H1 (cell line): ENCODE measurements at regions of chr1 and their contacts with region 1.

Region 1: GRCh38 chr1:206912445-206913095 is 9.2 kb downstream of the FCMR start:
- DNase-seq: peak in 1 of 2 experiments; percentile 67
- H3K4me3 ChIP-seq: no peak overlapping the region
- H3K27ac ChIP-seq: no peak overlapping the region
- H3K4me1 ChIP-seq: peaks cover 0 to 7% (median under 1%) of the 10 kb centered on the region in 4 experiments; a peak in 2 of 7 replicates
- H3K27me3 ChIP-seq: peaks cover 8 to 30% (median 27%) of the 10 kb centered on the region in 4 experiments
- CTCF ChIP-seq: peak; percentile 69 to 90 (median 87)
- EP300 ChIP-seq: no peak
- POLR2A ChIP-seq: no peak
- RAD21 ChIP-seq: peak; percentile 80 to 87

Region 2: GRCh38 chr1:206635080-206635977 is 277.2 kb before region 1 on chr1 and contains the start of gene DYRK3:
- CTCF ChIA-PET with region 1: interaction called, 14 read pairs
- POLR2A ChIA-PET with region 1: interaction called, 3 read pairs
- DNase-seq: peak; percentile 63 to 97
- H3K4me3 ChIP-seq: peak within 1 kb of the TSS; percentile 66 to 88 (median 79)
- H3K27ac ChIP-seq: no peak within 1 kb of the TSS
- H3K4me1 ChIP-seq: peaks cover 0 to 10% (median 4%) of the 10 kb centered on the region in 4 experiments; a peak in 4 of 7 replicates
- H3K27me3 ChIP-seq: peaks cover 0 to 4% (median 0%) of the 10 kb centered on the region in 4 experiments; a peak in 2 of 7 replicates
- CTCF ChIP-seq: no peak
- EP300 ChIP-seq: no peak
- POLR2A ChIP-seq: peak in 1 of 2 experiments; percentile 68; a peak in 1 of 3 replicates
- RAD21 ChIP-seq: no peak
- total RNA-seq, gene DYRK3: 7.7 and 8.5 TPM in 2 replicates

Region 3: GRCh38 chr1:206744683-206745082 is 167.9 kb before region 1 on chr1:
- CTCF ChIA-PET with region 1: interaction called, 11 read pairs
- POLR2A ChIA-PET with region 1: no interaction called
- DNase-seq: no peak
- H3K4me3 ChIP-seq: no peak overlapping the region
- H3K27ac ChIP-seq: no peak overlapping the region
- H3K4me1 ChIP-seq: no peaks in the 10 kb centered on the region
- H3K27me3 ChIP-seq: no peaks in the 10 kb centered on the region; a peak in 1 of 7 replicates
- CTCF ChIP-seq: no peak
- EP300 ChIP-seq: no peak
- POLR2A ChIP-seq: no peak
- RAD21 ChIP-seq: no peak

Region 4: GRCh38 chr1:206803221-206803730 is 109.3 kb before region 1 on chr1:
- CTCF ChIA-PET with region 1: interaction called, 57 read pairs
- POLR2A ChIA-PET with region 1: no interaction called
- DNase-seq: no peak
- H3K4me3 ChIP-seq: no peak overlapping the region
- H3K27ac ChIP-seq: no peak overlapping the region
- H3K4me1 ChIP-seq: no peaks in the 10 kb centered on the region
- H3K27me3 ChIP-seq: no peaks in the 10 kb centered on the region
- CTCF ChIP-seq: no peak
- EP300 ChIP-seq: no peak
- POLR2A ChIP-seq: no peak
- RAD21 ChIP-seq: no peak

Region 5: DNA sequence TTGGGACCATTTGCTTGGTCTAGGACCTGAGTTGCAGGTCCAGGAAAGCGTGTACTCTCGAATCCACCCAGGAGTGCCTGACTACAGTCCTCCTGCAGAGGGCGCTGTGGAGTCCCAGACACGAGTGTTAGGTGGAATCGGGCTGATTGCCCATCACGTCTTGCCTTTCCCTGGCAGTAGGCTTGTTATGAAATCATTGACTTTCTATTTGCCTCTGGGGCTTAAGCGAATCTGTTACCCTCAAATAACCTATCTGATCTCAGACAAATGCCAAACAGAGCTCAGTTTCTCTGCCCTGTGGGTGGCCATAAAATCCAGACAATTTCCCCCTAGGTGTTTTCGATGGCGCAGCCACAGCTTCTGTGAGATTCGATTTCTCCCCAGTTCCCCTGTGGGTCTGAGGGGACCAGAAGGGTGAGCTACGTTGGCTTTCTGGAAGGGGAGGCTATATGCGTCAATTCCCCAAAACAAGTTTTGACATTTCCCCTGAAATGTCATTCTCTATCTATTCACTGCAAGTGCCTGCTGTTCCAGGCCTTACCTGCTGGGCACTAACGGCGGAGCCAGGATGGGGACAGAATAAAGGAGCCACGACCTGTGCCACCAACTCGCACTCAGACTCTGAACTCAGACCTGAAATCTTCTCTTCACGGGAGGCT is 47.4 kb before region 1 on chr1 and contains the start of gene IL20:
- CTCF ChIA-PET with region 1: interaction called, 60 read pairs
- POLR2A ChIA-PET with region 1: no interaction called
- DNase-seq: peak; percentile 43 to 96
- H3K4me3 ChIP-seq: no peak within 1 kb of the TSS
- H3K27ac ChIP-seq: no peak within 1 kb of the TSS
- H3K4me1 ChIP-seq: no peaks in the 10 kb centered on the region
- H3K27me3 ChIP-seq: peaks cover 0 to 2% (median 0%) of the 10 kb centered on the region in 4 experiments; a peak in 1 of 7 replicates
- CTCF ChIP-seq: peak; percentile 93 to 99 (median 97)
- EP300 ChIP-seq: no peak
- POLR2A ChIP-seq: no peak
- RAD21 ChIP-seq: peak; percentile 61 to 74
- total RNA-seq, gene IL20: not detected in 2 replicates

Region 6: GRCh38 chr1:206895830-206896242 is 16.7 kb before region 1 on chr1:
- CTCF ChIA-PET with region 1: interaction called, 52 read pairs
- POLR2A ChIA-PET with region 1: interaction called, 4 read pairs
- DNase-seq: no peak
- H3K4me3 ChIP-seq: no peak overlapping the region
- H3K27ac ChIP-seq: no peak overlapping the region
- H3K4me1 ChIP-seq: peaks cover 0 to 1% (median 0%) of the 10 kb centered on the region in 4 experiments; a peak in 2 of 7 replicates
- H3K27me3 ChIP-seq: no peaks in the 10 kb centered on the region
- CTCF ChIP-seq: no peak
- EP300 ChIP-seq: no peak
- POLR2A ChIP-seq: no peak
- RAD21 ChIP-seq: no peak

Region 7: DNA sequence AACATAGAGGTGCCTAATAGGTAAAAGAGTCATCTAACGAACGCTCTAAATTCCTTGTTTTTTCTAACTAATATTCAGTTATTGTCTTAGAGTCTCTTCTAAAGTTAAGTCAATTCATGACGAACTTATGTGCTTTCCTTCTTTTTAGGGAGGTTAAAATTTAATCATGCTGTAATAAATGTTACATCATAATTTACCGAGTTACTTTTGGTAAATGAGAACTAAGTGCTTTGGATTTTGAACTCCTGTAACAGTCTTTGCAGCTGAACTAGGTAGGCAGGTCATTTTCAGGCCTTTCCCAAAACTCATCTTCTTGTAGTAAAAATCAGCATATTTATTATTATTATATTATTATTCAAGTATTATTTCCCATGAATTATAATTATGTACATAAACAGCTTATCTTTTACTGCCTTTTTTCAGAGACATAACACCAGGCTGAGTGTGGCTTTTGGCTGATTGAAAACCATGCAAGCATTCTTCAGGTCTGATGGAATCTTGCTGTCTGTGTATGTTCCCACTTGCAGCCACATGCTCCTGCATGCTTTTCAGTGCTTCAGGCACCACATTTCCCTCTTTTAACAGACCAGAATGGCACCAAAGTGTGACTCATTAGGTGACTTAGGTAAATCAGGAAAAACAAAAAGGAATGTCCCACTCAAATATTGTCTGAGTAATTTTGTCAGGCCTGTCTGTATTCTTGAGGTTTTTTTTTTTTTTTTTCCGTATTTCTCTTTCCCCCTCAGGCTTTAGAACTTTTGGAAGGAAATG is 327.9 kb after region 1 on chr1:
- CTCF ChIA-PET with region 1: no interaction called
- POLR2A ChIA-PET with region 1: no interaction called
- DNase-seq: no peak
- H3K4me3 ChIP-seq: no peak overlapping the region
- H3K27ac ChIP-seq: no peak overlapping the region
- H3K4me1 ChIP-seq: no peaks in the 10 kb centered on the region
- H3K27me3 ChIP-seq: no peaks in the 10 kb centered on the region
- CTCF ChIP-seq: no peak
- EP300 ChIP-seq: no peak
- POLR2A ChIP-seq: no peak
- RAD21 ChIP-seq: no peak